Right ventricle myocardium inferior (tissue), 1 donor: ENCODE measurements at regions of chr7 and their contacts with region 1.

Region 1: GRCh38 chr7:31006857-31007256 is 43.1 kb downstream of the GHRHR start:
- DNase-seq: no peak
- ATAC-seq: no peak

Region 2: DNA sequence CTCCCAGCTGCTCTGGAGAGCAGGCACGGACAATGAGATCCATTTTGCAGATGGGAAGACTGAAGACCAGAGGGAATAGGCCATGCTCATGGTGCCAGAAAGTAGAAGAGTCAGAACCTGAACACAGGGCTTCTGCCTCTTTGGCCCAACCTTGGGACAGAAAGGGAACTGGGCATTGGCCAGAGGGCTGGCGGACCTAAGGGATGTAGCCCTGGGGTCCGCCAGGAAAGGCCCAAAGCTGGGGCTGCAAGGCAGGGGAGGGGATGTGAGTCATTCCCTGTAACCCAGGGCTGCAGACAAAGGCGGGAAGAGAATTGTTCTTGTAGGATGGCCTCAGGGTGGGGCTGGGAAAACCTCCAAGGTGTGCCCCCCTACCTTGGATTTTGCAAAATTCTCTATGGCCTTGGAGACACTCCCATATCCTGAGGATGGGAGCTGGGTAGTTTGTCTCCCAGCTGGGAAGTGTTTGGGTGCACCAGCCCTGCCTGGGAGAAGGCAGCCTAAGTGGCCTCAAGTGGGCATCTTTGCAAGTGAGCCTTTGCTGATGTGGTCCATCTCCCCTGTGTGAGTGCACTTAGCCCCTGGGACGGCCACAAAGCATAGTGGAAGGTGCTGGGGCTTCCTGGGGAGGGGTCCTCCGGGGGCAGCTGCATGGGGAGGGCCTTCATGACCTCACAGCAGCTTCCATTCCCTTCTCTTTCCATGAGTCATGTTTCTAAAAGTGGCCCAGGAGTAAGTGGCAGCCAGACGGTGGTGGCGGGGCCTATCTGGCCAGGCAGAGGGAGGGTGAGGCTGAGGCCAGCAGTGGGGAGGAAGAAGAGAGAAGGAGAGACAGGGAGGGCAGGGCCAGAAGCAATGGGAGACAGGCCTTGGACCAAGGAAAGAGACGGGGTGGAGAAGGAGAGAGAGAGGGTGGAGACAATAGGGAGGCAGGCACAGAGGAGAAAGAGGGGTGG is 86.0 kb before region 1 on chr7:
- intact Hi-C with region 1: no loop called
- DNase-seq: no peak
- ATAC-seq: peak; percentile 79

Region 3: GRCh38 chr7:31051598-31052486 is 45.0 kb after region 1 on chr7 and contains the start of gene ADCYAP1R1:
- intact Hi-C with region 1: loop called (anchors 5 kb)
- DNase-seq: no peak
- ATAC-seq: peak; percentile 90
- total RNA-seq, gene ADCYAP1R1: 5.8 TPM

Region 4: GRCh38 chr7:31432836-31433340 is 426.0 kb after region 1 on chr7:
- intact Hi-C with region 1: no loop called
- DNase-seq: no peak
- ATAC-seq: no peak